Adrenal gland (tissue), 19 donors: ENCODE measurements at regions of chr13 and their contacts with region 1.

Region 1: GRCh38 chr13:101757446-101758039 is 305.1 kb downstream of the ITGBL1 start:
- DNase-seq: no peak
- H3K4me3 ChIP-seq: no peak overlapping the region
- H3K27ac ChIP-seq: no peak overlapping the region
- H3K4me1 ChIP-seq: no peaks in the 10 kb centered on the region
- H3K27me3 ChIP-seq: peaks cover 3% of the 10 kb centered on the region
- CTCF ChIP-seq: peak; percentile 23 to 57 (median 46)
- POLR2A ChIP-seq: no peak

Region 2: GRCh38 chr13:101502618-101503017 is 254.9 kb before region 1 on chr13:
- intact Hi-C with region 1: loop called in 1 of 2 experiments (anchors 10 kb)
- DNase-seq: no peak
- H3K4me3 ChIP-seq: no peak overlapping the region
- H3K27ac ChIP-seq: no peak overlapping the region
- H3K4me1 ChIP-seq: no peaks in the 10 kb centered on the region
- H3K27me3 ChIP-seq: no peaks in the 10 kb centered on the region
- CTCF ChIP-seq: no peak
- POLR2A ChIP-seq: no peak

Region 3: GRCh38 chr13:101706651-101707050 is 50.9 kb before region 1 on chr13:
- intact Hi-C with region 1: no loop called
- DNase-seq: peak in 2 of 7 donors; percentile 18 to 22
- H3K4me3 ChIP-seq: no peak overlapping the region
- H3K27ac ChIP-seq: no peak overlapping the region
- H3K4me1 ChIP-seq: no peaks in the 10 kb centered on the region
- H3K27me3 ChIP-seq: no peaks in the 10 kb centered on the region
- CTCF ChIP-seq: no peak
- POLR2A ChIP-seq: no peak